ENCODE measurements at regions of chr17 and their contacts with region 1.

Region 1: DNA sequence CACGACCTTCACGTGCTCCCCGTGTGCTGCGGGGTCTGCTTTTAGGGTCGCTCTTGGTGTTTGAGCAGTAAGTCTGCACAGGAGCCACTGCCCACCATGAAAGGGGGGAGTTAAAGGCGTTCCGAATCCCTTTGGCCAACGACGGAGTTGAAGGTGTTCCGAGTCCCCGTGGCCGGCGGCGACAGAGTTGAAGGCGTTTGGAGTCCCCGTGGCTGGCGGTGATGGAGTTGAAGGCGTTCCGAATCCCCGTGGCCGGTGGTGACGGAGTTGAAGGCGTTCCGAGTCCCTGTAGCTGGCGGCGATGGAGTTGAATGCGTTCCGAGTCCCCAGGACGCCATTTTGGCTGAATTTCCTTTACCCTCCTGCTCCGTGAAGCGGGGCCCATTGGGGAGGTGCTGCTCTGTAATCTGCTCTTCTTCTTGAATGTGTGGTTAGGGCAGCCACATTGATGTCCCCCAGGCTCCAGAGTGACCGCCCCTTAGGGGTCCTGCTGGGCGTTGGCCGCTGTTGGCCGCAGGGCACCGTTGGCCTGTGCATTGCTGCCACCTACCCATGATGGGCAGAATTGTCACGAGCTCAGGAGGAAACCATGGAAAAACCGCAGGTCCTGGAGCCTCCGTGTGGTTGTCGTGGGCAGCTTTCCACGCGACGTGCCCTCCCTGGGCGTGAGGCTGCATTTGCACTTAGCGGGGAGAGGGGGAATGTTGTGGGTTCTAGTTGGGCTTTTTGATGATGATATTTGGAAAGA is 73.6 kb upstream of the ZNF750 start:
- DNase-seq: peak; percentile 29
- H3K4me3 Mint-ChIP-seq: no peak overlapping the region
- H3K27ac Mint-ChIP-seq: no peak overlapping the region
- H3K4me1 Mint-ChIP-seq: peaks cover 22% of the 10 kb centered on the region
- H3K27me3 Mint-ChIP-seq: no peaks in the 10 kb centered on the region

Region 2: DNA sequence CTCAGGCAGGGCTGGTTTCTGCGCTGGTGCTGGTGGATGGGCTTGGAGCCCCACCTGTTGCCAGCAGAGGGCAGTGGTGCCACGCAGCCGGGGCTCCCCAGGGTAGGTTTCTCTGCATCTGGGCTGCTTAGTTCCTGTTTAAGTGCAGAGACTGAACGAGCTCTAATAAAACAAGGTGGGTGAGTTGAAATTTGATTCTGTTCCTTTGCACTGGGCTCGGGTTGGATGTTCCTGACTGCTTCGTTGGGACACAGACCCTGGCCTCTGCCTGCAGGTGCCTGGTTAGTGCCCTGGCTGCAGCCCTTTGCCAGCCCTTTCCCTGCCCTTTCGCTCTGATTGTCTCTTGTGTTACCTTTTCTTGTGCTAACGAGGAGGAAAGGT is 131.6 kb before region 1 on chr17:
- CTCF ChIA-PET with region 1: interaction called, 7 read pairs
- intact Hi-C with region 1: loop called (anchors 1 kb)
- DNase-seq: peak; percentile 89
- H3K4me3 Mint-ChIP-seq: no peak overlapping the region
- H3K27ac Mint-ChIP-seq: no peak overlapping the region
- H3K4me1 Mint-ChIP-seq: peaks cover 4% of the 10 kb centered on the region
- H3K27me3 Mint-ChIP-seq: no peaks in the 10 kb centered on the region

Region 3: DNA sequence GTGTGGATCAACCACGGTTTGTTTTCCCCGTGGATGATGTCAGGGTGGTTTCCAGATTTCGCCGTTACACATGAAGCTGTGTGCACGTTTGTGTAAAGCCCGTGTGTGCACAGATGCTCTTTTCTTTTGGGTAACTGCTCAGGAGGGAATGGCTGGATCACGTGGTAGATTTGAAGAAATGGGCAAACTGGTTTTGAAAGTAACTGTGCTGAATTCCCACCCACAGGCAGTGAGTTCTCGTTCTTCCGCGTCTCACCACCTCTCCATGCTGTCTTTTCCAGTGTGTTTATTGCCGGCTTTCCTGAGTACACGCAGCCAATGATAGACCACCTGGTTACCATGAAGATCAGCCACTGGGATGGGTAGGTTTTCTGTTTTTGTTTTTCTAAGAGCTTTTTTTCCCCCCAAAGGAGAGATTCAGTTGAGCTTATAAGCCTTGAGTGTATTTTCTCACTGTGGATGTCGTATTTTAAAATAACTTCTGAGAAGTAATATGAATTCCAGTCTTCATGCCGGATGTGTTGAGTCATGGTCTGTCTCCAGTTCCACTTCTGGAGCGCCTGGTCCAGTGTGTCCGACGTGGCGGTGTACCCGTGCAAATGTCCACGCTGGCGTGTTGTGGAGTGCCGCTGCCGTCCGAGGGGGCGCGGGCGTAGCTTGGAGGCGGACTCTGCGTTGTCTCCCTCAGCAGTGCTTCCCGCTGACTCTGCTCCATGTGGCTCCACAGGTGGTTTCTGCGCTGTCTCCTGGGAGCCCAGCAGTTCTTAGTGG is 12.9 kb before region 1 on chr17:
- CTCF ChIA-PET with region 1: no interaction called
- intact Hi-C with region 1: no loop called
- DNase-seq: no peak
- H3K4me3 Mint-ChIP-seq: no peak overlapping the region
- H3K27ac Mint-ChIP-seq: no peak overlapping the region
- H3K4me1 Mint-ChIP-seq: peaks cover 10% of the 10 kb centered on the region
- H3K27me3 Mint-ChIP-seq: no peaks in the 10 kb centered on the region

Region 4: DNA sequence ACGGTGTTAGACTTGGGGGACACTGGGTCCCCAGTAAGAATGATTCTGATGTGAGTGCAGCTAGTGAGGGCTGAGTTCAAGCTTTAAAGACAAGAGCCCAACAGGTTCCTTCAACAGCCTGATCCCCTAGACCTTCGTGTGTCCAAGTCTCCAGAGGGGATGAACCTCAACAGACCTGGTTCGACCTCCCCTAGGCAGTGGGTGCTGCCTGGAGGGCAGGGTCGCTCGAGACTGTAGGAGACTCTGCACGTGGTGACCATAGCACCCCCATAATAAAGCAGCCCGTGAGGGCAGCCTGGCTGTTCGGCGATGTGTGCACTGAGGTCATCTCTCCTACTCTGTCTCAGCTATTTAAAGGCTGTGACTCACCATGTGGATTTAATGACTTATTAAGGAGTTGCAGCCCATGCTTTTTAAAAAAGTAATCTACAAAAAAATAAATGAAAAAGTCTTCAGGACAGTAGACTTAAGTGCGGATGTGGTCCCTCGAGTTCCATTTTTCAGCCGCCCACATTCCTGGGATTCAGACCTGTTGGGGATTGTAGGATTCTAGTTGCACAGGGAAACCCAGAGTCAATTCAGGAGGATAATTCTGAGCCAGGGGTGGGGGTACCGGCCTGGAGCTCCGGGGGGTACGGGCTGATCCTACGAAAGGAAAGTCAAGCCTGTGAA is 142.6 kb after region 1 on chr17:
- CTCF ChIA-PET with region 1: no interaction called
- intact Hi-C with region 1: no loop called
- DNase-seq: no peak
- H3K4me3 Mint-ChIP-seq: no peak overlapping the region
- H3K27ac Mint-ChIP-seq: no peak overlapping the region
- H3K4me1 Mint-ChIP-seq: peaks cover 4% of the 10 kb centered on the region
- H3K27me3 Mint-ChIP-seq: no peaks in the 10 kb centered on the region